ENCODE measurements at regions of chr3 and their contacts with region 1.

Region 1: DNA sequence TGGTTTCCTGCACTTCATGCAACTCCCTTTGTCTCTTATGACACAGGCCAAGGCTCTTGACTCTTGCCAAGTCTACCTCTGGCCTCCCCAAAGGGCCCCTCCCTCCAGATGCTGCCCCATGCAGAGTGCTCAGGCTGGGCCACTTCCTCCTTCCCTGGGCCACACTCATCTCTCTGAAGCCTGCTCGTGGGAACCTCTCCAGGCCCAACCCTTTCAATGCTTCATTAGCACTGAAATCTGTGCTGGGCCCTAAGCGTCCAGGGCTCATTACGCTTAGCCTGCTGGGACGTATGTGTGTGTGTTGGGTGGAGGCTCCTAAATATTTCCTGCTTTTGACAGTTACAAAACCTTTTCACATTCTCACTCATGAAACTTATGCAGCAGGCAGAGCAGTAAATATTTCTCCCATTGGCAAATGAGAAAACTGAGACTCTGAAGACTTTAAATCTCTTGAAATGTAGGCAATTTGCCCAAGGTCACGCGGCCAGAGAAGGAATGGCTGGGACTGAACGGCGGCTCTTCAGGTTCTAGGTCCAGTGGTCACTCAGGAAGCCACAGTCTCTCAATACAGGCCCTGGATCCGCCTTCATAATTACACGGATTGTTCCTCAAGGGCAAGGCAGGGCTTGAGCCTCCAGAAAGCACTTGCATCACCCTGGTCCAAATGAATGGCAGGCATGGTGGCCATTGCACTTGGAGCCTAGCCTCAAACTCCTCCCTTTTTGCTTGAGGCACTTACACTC is 241.7 kb upstream of the HES1 start:
- DNase-seq: peak; percentile 92
- H3K4me3 ChIP-seq: no peak overlapping the region
- H3K27ac ChIP-seq: peak overlapping the region; percentile 100
- H3K4me1 ChIP-seq: peaks cover 55% of the 10 kb centered on the region
- H3K27me3 ChIP-seq: no peaks in the 10 kb centered on the region
- CTCF ChIP-seq: no peak

Region 2: GRCh38 chr3:193665370-193665989 is 228.8 kb before region 1 on chr3:
- CTCF ChIA-PET with region 1: no interaction called
- POLR2A ChIA-PET with region 1: no interaction called
- intact Hi-C with region 1: loop called (anchors 2 kb)
- DNase-seq: peak; percentile 60
- H3K4me3 ChIP-seq: no peak overlapping the region
- H3K27ac ChIP-seq: peak overlapping the region; percentile 44
- H3K4me1 ChIP-seq: peaks cover 37% of the 10 kb centered on the region
- H3K27me3 ChIP-seq: no peaks in the 10 kb centered on the region
- CTCF ChIP-seq: peak; percentile 60

Region 3: GRCh38 chr3:193693774-193694173 is 200.5 kb before region 1 on chr3:
- CTCF ChIA-PET with region 1: no interaction called
- POLR2A ChIA-PET with region 1: no interaction called
- intact Hi-C with region 1: no loop called
- DNase-seq: no peak
- H3K4me3 ChIP-seq: no peak overlapping the region
- H3K27ac ChIP-seq: no peak overlapping the region
- H3K4me1 ChIP-seq: no peaks in the 10 kb centered on the region
- H3K27me3 ChIP-seq: no peaks in the 10 kb centered on the region
- CTCF ChIP-seq: no peak

Region 4: DNA sequence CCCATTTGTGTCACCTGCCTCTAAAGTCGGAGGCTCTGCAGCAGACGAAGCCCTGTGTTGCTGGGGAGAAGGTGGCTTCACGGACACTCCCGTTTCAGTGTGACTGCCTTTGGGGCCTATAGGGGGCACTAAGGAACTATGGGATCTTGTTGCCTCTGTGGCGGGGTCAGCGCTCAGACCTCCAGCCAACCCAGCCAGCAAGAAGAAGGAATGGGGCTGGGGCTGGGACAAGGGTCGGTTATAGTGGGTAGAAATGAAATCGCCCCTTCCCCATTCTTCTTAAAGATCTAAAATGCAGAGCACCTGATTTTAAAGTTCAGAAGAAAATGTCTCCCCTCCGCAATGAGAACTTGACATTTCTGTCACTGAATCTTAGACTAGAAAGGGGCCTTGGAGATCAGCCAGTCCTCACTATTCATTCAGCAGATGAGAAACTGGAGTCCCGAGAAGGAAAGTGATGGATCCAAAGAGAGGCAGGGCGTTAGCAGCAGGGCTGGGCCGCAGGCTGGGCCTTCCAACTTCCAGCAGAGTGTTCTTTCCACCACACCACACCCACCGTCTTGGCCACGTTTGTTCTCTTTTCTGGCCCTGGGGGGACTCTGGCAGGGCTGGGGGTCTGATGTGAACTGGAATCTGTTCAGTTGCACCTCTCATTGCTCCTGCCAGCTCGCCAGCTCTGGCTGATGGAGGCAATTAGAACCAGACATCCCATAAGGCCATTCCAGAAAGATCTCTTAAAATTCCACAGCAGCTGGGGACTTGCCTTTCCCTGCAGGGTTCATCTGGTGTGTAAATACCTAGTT is 105.9 kb before region 1 on chr3:
- CTCF ChIA-PET with region 1: no interaction called
- POLR2A ChIA-PET with region 1: interaction called, 4 read pairs
- intact Hi-C with region 1: loop called (anchors 2 kb)
- DNase-seq: peak; percentile 76
- H3K4me3 ChIP-seq: no peak overlapping the region
- H3K27ac ChIP-seq: peak overlapping the region; percentile 72
- H3K4me1 ChIP-seq: peaks cover 43% of the 10 kb centered on the region
- H3K27me3 ChIP-seq: no peaks in the 10 kb centered on the region
- CTCF ChIP-seq: peak; percentile 80

Region 5: DNA sequence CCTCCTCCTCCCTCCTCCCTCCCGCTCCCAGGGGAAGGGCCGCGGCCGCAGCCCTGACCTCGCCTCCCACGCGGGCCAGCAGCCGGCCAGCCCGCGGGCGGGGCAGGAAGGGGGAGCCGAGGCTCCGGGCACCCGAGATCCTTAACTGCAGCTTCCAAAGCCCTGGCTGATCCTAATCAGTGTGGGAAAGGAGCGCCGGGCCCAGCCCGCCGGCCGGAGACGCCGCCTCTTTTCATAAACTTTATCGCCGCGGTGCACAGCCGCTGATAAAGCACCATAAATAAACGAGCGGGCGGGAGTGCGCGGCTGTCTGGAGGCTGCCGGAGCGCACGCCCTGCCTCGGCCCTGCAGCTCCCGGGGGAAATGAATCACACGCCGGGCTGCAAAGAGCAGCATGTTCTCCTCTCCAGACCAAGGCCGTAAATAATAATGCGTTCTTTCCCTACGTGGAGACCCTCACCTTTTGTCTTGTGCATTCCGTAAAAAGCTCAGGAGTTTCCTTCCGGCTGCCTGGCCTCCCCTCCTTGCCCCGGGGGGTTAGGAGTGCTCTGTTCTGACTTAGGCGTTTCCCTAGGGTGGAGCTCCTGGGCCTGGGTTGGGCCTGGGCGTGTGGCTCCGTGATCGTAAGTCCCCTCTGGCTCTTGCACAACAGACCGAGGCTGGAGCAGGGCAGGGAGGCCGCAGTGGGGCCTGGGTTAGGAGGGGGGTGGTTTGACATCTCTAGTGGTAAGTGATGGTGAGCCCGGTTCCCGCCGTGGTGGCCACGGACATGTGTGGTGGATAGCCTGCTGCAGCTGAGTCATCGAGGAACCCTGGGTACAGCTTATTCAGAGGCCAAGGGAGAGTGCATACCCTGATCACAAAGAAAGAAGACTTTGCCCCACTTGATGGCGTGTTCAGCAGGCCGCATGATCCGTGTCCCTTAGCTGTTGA is 109.1 kb after region 1 on chr3:
- CTCF ChIA-PET with region 1: no interaction called
- POLR2A ChIA-PET with region 1: no interaction called
- intact Hi-C with region 1: loop called (anchors 1 kb)
- DNase-seq: peak; percentile 91
- H3K4me3 ChIP-seq: peak overlapping the region; percentile 46
- H3K27ac ChIP-seq: peak overlapping the region; percentile 80
- H3K4me1 ChIP-seq: peaks cover 54% of the 10 kb centered on the region
- H3K27me3 ChIP-seq: no peaks in the 10 kb centered on the region
- CTCF ChIP-seq: no peak

Region 6: GRCh38 chr3:194315088-194315964 is 421.0 kb after region 1 on chr3:
- CTCF ChIA-PET with region 1: interaction called, 15 read pairs
- POLR2A ChIA-PET with region 1: interaction called, 25 read pairs
- intact Hi-C with region 1: loop called (anchors 1 kb)
- DNase-seq: peak; percentile 94
- H3K4me3 ChIP-seq: peak overlapping the region; percentile 48
- H3K27ac ChIP-seq: peak overlapping the region; percentile 87
- H3K4me1 ChIP-seq: peaks cover 37% of the 10 kb centered on the region
- H3K27me3 ChIP-seq: no peaks in the 10 kb centered on the region
- CTCF ChIP-seq: peak; percentile 92